Heart left ventricle (tissue), 16 donors: ENCODE measurements at regions of chr2 and their contacts with region 1.

Region 1: GRCh38 chr2:126971481-126972278 is 73.0 kb downstream of the TEX51 start:
- DNase-seq: peak; percentile 47 to 85 (median 67)
- ATAC-seq: peak; percentile 79 to 93 (median 88)
- H3K4me3 ChIP-seq: peak overlapping the region in 11 of 12 donors; percentile 20 to 61 (median 52)
- H3K27ac ChIP-seq: peak overlapping the region in 1 of 12 donors; percentile 35
- H3K4me1 ChIP-seq: peaks cover 0 to 14% (median 5%) of the 10 kb centered on the region in 12 donors
- H3K27me3 ChIP-seq: peaks cover 0 to 42% (median 7%) of the 10 kb centered on the region in 9 donors
- CTCF ChIP-seq: peak; percentile 88 to 98 (median 96)
- POLR2A ChIP-seq: no peak

Region 2: GRCh38 chr2:126244937-126245336 is 726.7 kb before region 1 on chr2:
- intact Hi-C with region 1: loop called in 3 of 10 experiments (anchors 5 to 10 kb)
- DNase-seq: peak in 4 of 5 donors; percentile 20 to 57 (median 32)
- ATAC-seq: no peak
- H3K4me3 ChIP-seq: no peak overlapping the region
- H3K27ac ChIP-seq: no peak overlapping the region
- H3K4me1 ChIP-seq: peaks cover 0 to 10% (median 0%) of the 10 kb centered on the region in 12 donors
- H3K27me3 ChIP-seq: no peaks in the 10 kb centered on the region
- CTCF ChIP-seq: peak; percentile 14 to 57 (median 39)
- POLR2A ChIP-seq: no peak

Region 3: GRCh38 chr2:126657636-126658318 is 313.9 kb before region 1 on chr2:
- intact Hi-C with region 1: no loop called
- DNase-seq: peak; percentile 77 to 95 (median 90)
- ATAC-seq: peak; percentile 62 to 86 (median 79)
- H3K4me3 ChIP-seq: peak overlapping the region; percentile 67 to 94 (median 77)
- H3K27ac ChIP-seq: peak overlapping the region; percentile 96 to 100 (median 98)
- H3K4me1 ChIP-seq: peaks cover 17 to 74% (median 70%) of the 10 kb centered on the region in 12 donors
- H3K27me3 ChIP-seq: no peaks in the 10 kb centered on the region
- CTCF ChIP-seq: peak in 1 of 12 donors; percentile 21
- POLR2A ChIP-seq: peak in 1 of 2 donors; percentile 61